Activated CD4-positive, alpha-beta memory T cell treated with anti-CD3 and anti-CD28 coated beads for 36 hours (primary cell): ENCODE measurements at regions of chr1 and their contacts with region 1.

Region 1: GRCh38 chr1:51729156-51729823 is 112.4 kb downstream of the OSBPL9 start:
- DNase-seq: peak; percentile 97
- H3K4me3 Mint-ChIP-seq: peak overlapping the region; percentile 87
- H3K27ac Mint-ChIP-seq: peak overlapping the region; percentile 80
- H3K4me1 Mint-ChIP-seq: peaks cover 39% of the 10 kb centered on the region
- H3K27me3 Mint-ChIP-seq: no peaks in the 10 kb centered on the region

Region 2: DNA sequence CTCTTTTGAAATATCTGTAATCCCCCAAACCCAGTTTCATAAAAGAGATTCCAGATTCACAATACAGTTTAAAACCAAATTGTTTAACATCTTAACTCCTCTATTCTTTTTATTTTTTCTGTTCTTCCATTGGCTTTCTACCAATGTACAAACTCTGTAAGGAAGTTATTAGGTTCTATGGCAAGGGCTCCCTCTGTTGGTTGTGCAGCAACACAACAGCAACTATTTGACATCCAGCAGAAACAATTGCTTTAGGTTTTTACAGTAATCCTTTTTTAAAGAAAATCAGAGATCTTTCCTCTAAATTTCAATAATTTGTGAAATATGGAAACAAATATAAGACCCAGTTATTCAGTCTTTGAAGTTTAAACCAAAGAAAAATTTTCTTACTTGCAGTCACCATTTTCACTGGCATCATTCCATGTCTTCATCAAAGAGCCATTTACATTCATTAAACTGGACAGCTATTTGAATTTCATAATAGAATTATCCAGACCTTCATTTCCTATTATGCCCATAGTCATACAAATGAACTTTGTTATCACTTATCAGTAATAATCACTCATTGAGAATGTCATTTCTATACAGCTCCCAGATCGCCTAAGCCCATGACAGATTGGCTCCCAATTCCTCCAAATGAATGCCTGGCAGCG is 539.7 kb before region 1 on chr1:
- CTCF ChIA-PET with region 1: no interaction called
- POLR2A ChIA-PET with region 1: no interaction called
- intact Hi-C with region 1: no loop called
- DNase-seq: peak; percentile 37
- H3K4me3 Mint-ChIP-seq: no peak overlapping the region
- H3K27ac Mint-ChIP-seq: no peak overlapping the region
- H3K4me1 Mint-ChIP-seq: no peaks in the 10 kb centered on the region
- H3K27me3 Mint-ChIP-seq: no peaks in the 10 kb centered on the region

Region 3: DNA sequence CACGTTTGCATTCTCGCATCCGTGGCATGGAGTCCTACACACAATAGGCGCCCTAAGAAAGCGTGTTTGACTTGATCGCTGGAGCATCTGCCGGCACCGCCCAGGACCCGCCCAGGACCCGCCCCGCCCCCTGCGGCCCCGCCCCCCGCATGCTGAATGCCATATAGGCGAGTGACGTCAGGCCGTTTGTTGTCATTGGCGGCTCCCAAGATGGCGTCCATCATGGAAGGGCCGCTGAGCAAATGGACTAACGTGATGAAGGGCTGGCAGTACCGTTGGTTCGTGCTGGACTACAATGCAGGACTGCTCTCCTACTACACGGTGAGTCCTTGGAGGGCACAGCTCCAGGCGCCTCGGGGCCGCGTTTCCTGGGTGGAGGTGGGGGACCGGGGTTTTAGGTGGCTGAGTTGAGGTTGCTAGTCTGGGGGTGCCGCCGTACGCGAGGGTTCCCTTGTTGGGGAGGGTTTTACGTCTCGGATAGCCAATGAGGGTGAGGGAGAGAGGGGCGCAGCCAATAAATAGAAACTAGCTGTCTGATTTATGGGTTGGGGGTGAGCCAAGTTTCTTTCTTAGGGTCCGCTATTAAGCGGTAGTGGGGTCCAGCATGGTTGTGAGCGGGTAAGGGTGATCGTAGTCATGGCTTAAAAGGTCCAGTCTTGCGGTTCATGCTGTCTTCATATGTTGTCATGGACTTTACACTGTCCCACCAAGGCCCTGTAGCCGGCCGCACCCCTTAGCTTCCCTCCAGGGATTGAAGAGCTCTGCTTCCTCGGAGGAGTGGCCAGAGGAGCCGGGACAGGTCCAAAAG is 112.2 kb before region 1 on chr1 and contains the start of gene OSBPL9:
- CTCF ChIA-PET with region 1: interaction called, 3 read pairs
- POLR2A ChIA-PET with region 1: interaction called, 3 read pairs
- intact Hi-C with region 1: loop called (anchors 1 kb)
- DNase-seq: peak; percentile 94
- H3K4me3 Mint-ChIP-seq: peak within 1 kb of the TSS; percentile 99
- H3K27ac Mint-ChIP-seq: peak within 1 kb of the TSS; percentile 80
- H3K4me1 Mint-ChIP-seq: peaks cover 32% of the 10 kb centered on the region
- H3K27me3 Mint-ChIP-seq: no peaks in the 10 kb centered on the region
- total RNA-seq, gene OSBPL9: 46.1 to 48.6 TPM

Region 4: GRCh38 chr1:51753969-51754368 is 24.7 kb after region 1 on chr1:
- CTCF ChIA-PET with region 1: interaction called, 3 read pairs
- POLR2A ChIA-PET with region 1: interaction called, 3 read pairs
- intact Hi-C with region 1: loop called (anchors 1 kb)
- DNase-seq: no peak
- H3K4me3 Mint-ChIP-seq: no peak overlapping the region
- H3K27ac Mint-ChIP-seq: no peak overlapping the region
- H3K4me1 Mint-ChIP-seq: peaks cover 11% of the 10 kb centered on the region
- H3K27me3 Mint-ChIP-seq: no peaks in the 10 kb centered on the region